ENCODE measurements at regions of chr20 and their contacts with region 1.

Region 1: GRCh38 chr20:2729251-2729713 is 36.7 kb downstream of the EBF4 start:
- DNase-seq: peak in 25 of 35 experiments; percentile 25 to 70 (median 42)
- ATAC-seq: peak; percentile 98 to 99 (median 98)
- H3K4me3 ChIP-seq: no peak overlapping the region
- H3K4me3 Mint-ChIP-seq: peak overlapping the region in 2 of 3 donors; percentile 42 to 58
- H3K27ac ChIP-seq: peak overlapping the region; percentile 64
- H3K27ac Mint-ChIP-seq: peak overlapping the region; percentile 91 to 96
- H3K4me1 ChIP-seq: peaks cover 17 to 26% of the 10 kb centered on the region in 2 experiments
- H3K4me1 Mint-ChIP-seq: peaks cover 29 to 31% (median 31%) of the 10 kb centered on the region in 3 donors
- H3K27me3 ChIP-seq: peaks cover 0 to 3% of the 10 kb centered on the region in 2 experiments
- H3K27me3 Mint-ChIP-seq: peaks cover 0 to 6% of the 10 kb centered on the region in 2 donors

Region 2: GRCh38 chr20:2713285-2713684 is 16.0 kb before region 1 on chr20:
- CTCF ChIA-PET with region 1: interaction called, 6 to 11 read pairs
- POLR2A ChIA-PET with region 1: interaction called in 1 of 2 experiments, 3 read pairs
- DNase-seq: peak in 2 of 35 experiments; percentile 25 to 70
- ATAC-seq: peak; percentile 75 to 92 (median 82)
- H3K4me3 ChIP-seq: no peak overlapping the region
- H3K4me3 Mint-ChIP-seq: no peak overlapping the region
- H3K27ac ChIP-seq: no peak overlapping the region
- H3K27ac Mint-ChIP-seq: no peak overlapping the region
- H3K4me1 ChIP-seq: no peaks in the 10 kb centered on the region
- H3K4me1 Mint-ChIP-seq: peaks cover 0 to 2% (median 0%) of the 10 kb centered on the region in 3 donors
- H3K27me3 ChIP-seq: peaks cover 0 to 11% of the 10 kb centered on the region in 2 experiments
- H3K27me3 Mint-ChIP-seq: peaks cover 0 to 5% of the 10 kb centered on the region in 2 donors